Ascending aorta (tissue), 2 donors: ENCODE measurements at regions of chr12 and their contacts with region 1.

Region 1: DNA sequence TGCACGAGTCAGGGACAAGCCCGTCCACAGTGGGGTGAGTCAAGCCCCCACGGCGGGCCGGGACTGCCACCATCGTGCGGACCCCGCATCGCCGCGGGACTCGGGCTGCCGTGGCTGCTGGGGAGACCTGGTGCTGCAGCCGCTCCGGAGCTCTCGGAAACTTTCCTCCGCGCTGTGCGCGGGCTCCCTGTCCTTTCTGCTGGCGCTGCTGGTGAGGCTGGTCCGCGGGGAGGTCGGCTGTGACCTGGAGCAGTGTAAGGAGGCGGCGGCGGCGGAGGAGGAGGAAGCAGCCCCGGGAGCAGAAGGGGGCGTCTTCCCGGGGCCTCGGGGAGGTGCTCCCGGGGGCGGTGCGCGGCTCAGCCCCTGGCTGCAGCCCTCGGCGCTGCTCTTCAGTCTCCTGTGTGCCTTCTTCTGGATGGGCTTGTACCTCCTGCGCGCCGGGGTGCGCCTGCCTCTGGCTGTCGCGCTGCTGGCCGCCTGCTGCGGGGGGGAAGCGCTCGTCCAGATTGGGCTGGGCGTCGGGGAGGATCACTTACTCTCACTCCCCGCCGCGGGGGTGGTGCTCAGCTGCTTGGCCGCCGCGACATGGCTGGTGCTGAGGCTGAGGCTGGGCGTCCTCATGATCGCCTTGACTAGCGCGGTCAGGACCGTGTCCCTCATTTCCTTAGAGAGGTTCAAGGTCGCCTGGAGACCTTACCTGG is 1.1 kb downstream of the PDE3A start:
- DNase-seq: peak in 1 of 2 donors; percentile 89
- H3K4me3 ChIP-seq: peak overlapping the region; percentile 63 to 94
- H3K27ac ChIP-seq: peak overlapping the region; percentile 92 to 98
- H3K4me1 ChIP-seq: no peaks in the 10 kb centered on the region
- H3K27me3 ChIP-seq: no peaks in the 10 kb centered on the region
- CTCF ChIP-seq: peak; percentile 25 to 35 (median 35)

Region 2: GRCh38 chr12:19744734-19745218 is 624.7 kb before region 1 on chr12:
- intact Hi-C with region 1: loop called (anchors 5 kb)
- DNase-seq: no peak
- H3K4me3 ChIP-seq: no peak overlapping the region
- H3K27ac ChIP-seq: no peak overlapping the region
- H3K4me1 ChIP-seq: peaks cover 3 to 14% of the 10 kb centered on the region in 2 donors
- H3K27me3 ChIP-seq: no peaks in the 10 kb centered on the region
- CTCF ChIP-seq: no peak

Region 3: GRCh38 chr12:20120328-20120695 is 249.1 kb before region 1 on chr12:
- intact Hi-C with region 1: loop called (anchors 5 kb)
- DNase-seq: no peak
- H3K4me3 ChIP-seq: no peak overlapping the region
- H3K27ac ChIP-seq: peak overlapping the region; percentile 24 to 44
- H3K4me1 ChIP-seq: peaks cover 0 to 6% of the 10 kb centered on the region in 2 donors
- H3K27me3 ChIP-seq: no peaks in the 10 kb centered on the region
- CTCF ChIP-seq: no peak

Region 4: GRCh38 chr12:20264608-20265114 is 104.8 kb before region 1 on chr12:
- intact Hi-C with region 1: loop called (anchors 5 kb)
- DNase-seq: no peak
- H3K4me3 ChIP-seq: no peak overlapping the region
- H3K27ac ChIP-seq: no peak overlapping the region
- H3K4me1 ChIP-seq: peaks cover 0 to 9% of the 10 kb centered on the region in 2 donors
- H3K27me3 ChIP-seq: no peaks in the 10 kb centered on the region
- CTCF ChIP-seq: no peak

Region 5: GRCh38 chr12:20342111-20342510 is 27.3 kb before region 1 on chr12:
- intact Hi-C with region 1: no loop called
- DNase-seq: no peak
- H3K4me3 ChIP-seq: no peak overlapping the region
- H3K27ac ChIP-seq: no peak overlapping the region
- H3K4me1 ChIP-seq: peaks cover 0 to 2% of the 10 kb centered on the region in 2 donors
- H3K27me3 ChIP-seq: no peaks in the 10 kb centered on the region
- CTCF ChIP-seq: no peak

Region 6: DNA sequence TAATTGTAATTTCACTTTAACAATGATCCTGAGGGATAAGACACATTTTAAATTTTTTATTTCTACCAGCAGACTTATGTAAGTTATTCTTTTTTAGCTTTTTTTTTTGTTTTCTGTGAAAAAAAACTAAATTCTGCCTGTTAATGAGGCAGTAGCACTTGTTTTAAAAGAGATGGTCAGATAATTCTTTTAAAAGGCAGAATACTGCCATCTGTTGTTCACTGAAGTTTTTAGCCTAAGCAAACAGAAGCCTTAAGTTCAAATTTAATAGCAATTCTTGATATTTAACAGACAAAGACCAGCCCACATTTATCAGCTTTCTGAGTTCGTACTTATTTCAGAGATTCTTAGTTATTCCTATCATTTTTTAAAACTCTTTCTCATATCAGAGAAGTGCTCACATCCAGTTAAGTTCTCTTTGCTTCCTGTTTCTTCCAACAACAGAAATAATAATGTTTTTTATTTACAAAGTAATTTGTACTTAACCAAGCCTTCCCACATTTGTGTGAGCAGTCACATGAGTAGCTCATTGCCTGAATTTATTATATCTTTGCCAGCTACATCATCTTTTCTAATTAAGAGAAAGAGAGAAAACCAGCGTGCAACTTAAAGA is 232.3 kb after region 1 on chr12:
- intact Hi-C with region 1: loop called (anchors 2 kb)
- DNase-seq: no peak
- H3K4me3 ChIP-seq: peak overlapping the region in 1 of 2 donors; percentile 6
- H3K27ac ChIP-seq: peak overlapping the region; percentile 68 to 86
- H3K4me1 ChIP-seq: peaks cover 0 to 28% of the 10 kb centered on the region in 2 donors
- H3K27me3 ChIP-seq: no peaks in the 10 kb centered on the region
- CTCF ChIP-seq: peak in 2 of 3 experiments; percentile 46 to 68